T-cell (primary cell): ENCODE measurements at regions of chr1 and their contacts with region 1.

Region 1: DNA sequence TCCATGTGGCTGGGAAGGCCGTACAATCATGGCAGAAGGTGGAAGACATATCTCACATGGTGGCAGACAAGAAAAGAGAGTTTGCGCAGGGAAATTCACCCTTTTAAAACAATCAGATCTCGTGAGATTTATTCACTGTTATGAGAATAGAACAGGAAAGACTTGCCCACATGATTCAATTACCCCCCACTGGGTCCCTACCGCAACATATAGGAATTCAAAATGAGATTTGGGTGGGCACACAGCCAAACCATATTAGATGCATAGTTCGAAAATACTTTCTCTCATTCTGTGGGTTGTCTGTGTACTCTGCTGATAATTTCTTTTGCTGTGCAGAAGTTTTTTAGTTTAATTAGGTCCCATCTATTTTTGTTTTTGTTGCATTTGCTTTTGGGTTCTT is 990.3 kb downstream of the PLA2G4A start:
- DNase-seq: no peak
- ATAC-seq: no peak
- H3K4me3 ChIP-seq: no peak overlapping the region
- H3K4me3 Mint-ChIP-seq: no peak overlapping the region
- H3K27ac ChIP-seq: no peak overlapping the region
- H3K27ac Mint-ChIP-seq: no peak overlapping the region
- H3K4me1 ChIP-seq: no peaks in the 10 kb centered on the region
- H3K4me1 Mint-ChIP-seq: no peaks in the 10 kb centered on the region
- H3K27me3 ChIP-seq: no peaks in the 10 kb centered on the region
- H3K27me3 Mint-ChIP-seq: no peaks in the 10 kb centered on the region

Region 2: DNA sequence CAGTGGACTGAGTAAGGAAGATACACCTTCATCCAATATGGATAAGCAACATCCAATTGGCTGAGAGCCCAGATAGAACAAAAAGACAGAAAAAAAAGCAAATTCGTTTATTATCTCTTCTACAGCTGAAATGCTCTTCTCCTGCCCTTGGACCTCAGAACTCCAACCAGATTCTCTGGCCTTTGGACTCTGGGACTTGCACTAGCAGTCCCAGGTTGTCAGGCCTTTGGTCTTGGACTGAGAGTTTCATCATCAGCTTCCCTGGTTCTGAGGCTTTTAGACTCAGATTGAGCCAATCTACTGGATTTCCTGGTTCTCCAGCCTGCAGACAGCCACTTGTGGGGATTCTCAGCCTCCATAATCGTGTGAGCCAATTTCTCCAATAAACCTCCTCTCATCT is 63.5 kb before region 1 on chr1:
- CTCF ChIA-PET with region 1: no interaction called
- POLR2A ChIA-PET with region 1: interaction called in 1 of 2 experiments, 10 read pairs
- DNase-seq: no peak
- ATAC-seq: no peak
- H3K4me3 ChIP-seq: no peak overlapping the region
- H3K4me3 Mint-ChIP-seq: no peak overlapping the region
- H3K27ac ChIP-seq: no peak overlapping the region
- H3K27ac Mint-ChIP-seq: no peak overlapping the region
- H3K4me1 ChIP-seq: no peaks in the 10 kb centered on the region
- H3K4me1 Mint-ChIP-seq: no peaks in the 10 kb centered on the region
- H3K27me3 ChIP-seq: no peaks in the 10 kb centered on the region
- H3K27me3 Mint-ChIP-seq: no peaks in the 10 kb centered on the region

Region 3: GRCh38 chr1:187836557-187836956 is 17.5 kb after region 1 on chr1:
- CTCF ChIA-PET with region 1: no interaction called
- POLR2A ChIA-PET with region 1: no interaction called
- DNase-seq: no peak
- ATAC-seq: no peak
- H3K4me3 ChIP-seq: no peak overlapping the region
- H3K4me3 Mint-ChIP-seq: no peak overlapping the region
- H3K27ac ChIP-seq: no peak overlapping the region
- H3K27ac Mint-ChIP-seq: no peak overlapping the region
- H3K4me1 ChIP-seq: no peaks in the 10 kb centered on the region
- H3K4me1 Mint-ChIP-seq: no peaks in the 10 kb centered on the region
- H3K27me3 ChIP-seq: no peaks in the 10 kb centered on the region
- H3K27me3 Mint-ChIP-seq: no peaks in the 10 kb centered on the region